Activated CD4-positive, alpha-beta T cell treated with anti-CD3 and anti-CD28 coated beads, Interleukin-2, amount 10 ng/mL, durations not matched to agents 24 days and 14 days (primary cell): ENCODE measurements at regions of chr7 and their contacts with region 1.

Region 1: DNA sequence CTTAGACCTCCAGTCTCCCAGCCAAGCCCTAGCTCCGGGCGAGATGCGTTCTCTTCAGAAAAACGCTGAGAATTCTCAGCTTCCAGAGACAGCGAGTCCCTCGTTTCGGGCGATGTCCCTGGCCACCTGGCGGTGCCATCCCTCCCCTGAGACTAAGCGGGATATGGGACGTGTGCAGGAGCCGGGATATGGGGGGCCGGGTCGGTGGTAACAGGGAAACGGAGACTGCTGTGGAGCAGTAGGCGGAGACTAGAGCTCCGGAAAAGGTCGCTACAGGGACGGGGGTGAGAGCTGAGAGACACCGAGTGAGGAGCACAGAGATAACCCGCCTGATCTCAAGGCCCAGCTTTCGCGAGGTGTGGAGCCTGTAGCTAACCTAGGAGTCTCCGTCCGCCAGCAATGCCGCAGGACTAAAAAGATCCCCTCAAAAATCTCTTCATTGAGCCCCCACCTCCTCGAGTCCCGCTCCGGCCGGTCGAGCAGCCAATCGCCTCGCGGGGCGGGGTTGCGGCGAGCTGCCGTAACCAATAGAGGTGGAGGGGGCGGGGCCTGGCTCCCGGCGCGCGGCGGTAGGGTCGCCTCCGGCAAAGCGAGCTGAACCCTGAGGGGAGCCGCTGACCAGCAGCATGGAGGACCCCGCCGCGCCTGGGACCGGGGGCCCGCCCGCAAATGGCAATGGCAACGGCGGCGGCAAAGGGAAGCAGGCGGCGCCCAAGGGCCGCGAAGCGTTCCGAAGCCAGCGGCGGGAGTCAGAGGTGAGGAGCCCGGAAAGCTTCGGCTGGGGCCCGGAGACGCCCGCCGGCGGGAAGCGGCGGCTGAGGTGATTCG is at the start of gene STRIP2:
- DNase-seq: peak; percentile 99
- H3K4me3 Mint-ChIP-seq: peak within 1 kb of the TSS; percentile 92
- H3K27ac Mint-ChIP-seq: peak within 1 kb of the TSS; percentile 90
- H3K4me1 Mint-ChIP-seq: peaks cover 32% of the 10 kb centered on the region
- H3K27me3 Mint-ChIP-seq: peaks cover 6% of the 10 kb centered on the region
- total RNA-seq, gene STRIP2: 86.6 and 89.6 TPM in 2 replicates

Region 2: DNA sequence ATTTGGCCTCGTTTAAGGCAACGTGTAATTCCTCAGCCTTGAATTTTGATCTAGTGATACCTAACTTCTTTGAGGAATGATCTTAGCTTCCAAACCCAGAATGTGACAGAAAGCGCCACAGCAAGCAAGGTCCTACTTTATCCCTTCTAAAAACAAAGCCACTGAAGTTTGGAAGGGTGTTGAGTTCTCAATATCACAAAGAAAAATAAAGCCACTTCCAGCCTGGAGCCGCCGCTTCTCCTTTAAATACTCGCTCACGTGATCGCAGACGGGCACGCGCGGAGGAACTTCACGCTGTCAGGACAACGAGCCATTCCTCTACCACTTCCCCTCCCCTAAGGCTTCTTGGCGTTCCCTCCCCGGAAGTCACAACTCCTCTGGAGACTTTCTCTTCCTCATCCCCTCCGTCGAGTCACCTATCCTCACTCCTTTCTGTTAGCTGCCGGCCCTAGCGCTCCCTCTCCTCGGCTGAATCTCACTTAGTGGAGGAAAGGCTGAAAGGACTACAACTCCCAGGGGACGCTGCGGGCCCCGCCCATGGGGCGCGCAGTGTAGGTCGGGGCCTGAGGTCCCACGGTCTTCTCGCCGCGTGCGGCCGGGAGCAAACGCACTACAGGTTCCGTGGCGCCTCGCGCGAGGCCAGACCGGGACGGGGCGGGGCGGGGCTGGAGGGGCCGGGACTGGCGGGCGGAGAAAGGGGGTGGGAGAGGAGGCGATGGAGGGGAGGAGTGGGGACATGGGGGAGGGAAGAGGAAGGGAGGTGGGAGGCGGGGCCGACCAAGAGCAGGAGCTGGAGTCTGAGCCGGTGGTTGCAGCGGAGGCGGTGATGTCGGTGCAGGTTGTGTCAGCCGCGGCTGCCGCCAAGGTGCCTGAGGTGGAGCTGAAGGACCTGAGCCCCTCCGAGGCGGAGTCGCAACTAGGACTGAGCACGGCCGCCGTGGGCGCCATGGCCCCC is 209.5 kb before region 1 on chr7 and contains the start of gene AHCYL2:
- intact Hi-C with region 1: loop called (anchors 1 kb)
- DNase-seq: peak; percentile 98
- H3K4me3 Mint-ChIP-seq: peak within 1 kb of the TSS; percentile 87
- H3K27ac Mint-ChIP-seq: peak within 1 kb of the TSS; percentile 96
- H3K4me1 Mint-ChIP-seq: peaks cover 24% of the 10 kb centered on the region
- H3K27me3 Mint-ChIP-seq: no peaks in the 10 kb centered on the region
- total RNA-seq, gene AHCYL2: 10.7 and 11.1 TPM in 2 replicates

Region 3: DNA sequence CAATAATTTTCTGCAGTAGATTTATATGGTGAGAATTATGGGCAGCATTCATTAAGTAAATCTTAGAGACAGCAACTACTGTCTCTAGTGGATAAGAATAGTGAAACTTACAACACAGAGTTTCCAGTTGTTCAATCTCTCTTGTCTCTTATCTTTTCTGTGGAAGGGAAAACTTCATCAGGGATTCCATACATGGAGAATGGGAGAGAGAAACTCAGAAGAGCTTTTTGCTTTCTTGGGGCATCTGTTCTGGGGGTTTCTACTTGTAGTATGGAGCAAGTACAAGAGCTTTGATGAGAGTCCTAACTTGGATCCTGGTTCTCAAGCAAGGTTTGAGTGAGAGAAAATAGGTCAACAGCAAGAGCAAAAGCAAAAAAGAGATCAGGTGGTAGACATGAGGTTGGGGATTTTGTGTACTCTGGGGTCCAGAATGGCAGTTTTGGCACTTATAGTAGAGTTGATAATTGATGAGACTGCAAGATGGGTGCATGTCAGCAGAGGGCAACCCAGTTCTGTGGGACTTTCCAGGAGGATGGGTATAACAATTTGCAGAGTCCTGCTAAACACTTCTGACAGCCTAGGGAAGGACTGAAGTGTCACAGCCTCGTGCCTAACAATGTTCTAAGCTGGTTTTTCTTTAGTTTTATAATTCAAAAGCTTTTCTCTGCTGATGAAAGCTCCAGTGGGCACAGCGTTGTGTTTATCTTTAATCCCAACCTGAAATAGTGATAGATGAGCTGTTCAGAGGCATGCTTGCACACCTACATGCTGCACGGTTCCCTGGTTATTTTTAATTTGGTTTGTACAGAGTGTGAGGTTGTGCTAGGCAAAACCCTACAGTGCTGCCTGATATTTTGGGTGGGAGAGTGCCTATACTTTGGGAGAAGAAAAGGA is 31.8 kb before region 1 on chr7:
- intact Hi-C with region 1: loop called (anchors 1 kb)
- DNase-seq: peak; percentile 73
- H3K4me3 Mint-ChIP-seq: no peak overlapping the region
- H3K27ac Mint-ChIP-seq: peak overlapping the region; percentile 6
- H3K4me1 Mint-ChIP-seq: peaks cover 20% of the 10 kb centered on the region
- H3K27me3 Mint-ChIP-seq: no peaks in the 10 kb centered on the region

Region 4: DNA sequence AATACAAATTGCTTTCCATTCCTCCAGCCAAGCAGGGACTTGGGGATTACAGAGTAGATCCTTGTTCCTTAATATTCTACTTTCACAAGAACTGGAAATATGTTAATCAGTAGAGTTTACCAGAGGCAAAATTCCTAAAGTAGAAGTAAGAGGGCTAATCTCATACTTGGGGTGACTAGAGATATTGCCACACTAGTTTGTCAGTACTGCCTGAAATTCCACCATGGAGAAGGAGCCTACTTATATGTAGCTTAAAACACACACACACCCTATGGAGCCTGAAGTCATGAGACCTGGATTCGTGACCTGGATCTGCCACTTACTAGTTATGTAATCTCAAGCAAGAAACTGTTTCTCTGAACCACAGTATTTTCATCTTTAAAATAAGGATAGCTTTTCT is 34.0 kb after region 1 on chr7:
- intact Hi-C with region 1: loop called (anchors 2 kb)
- DNase-seq: no peak
- H3K4me3 Mint-ChIP-seq: no peak overlapping the region
- H3K27ac Mint-ChIP-seq: no peak overlapping the region
- H3K4me1 Mint-ChIP-seq: peaks cover 15% of the 10 kb centered on the region
- H3K27me3 Mint-ChIP-seq: no peaks in the 10 kb centered on the region

Region 5: DNA sequence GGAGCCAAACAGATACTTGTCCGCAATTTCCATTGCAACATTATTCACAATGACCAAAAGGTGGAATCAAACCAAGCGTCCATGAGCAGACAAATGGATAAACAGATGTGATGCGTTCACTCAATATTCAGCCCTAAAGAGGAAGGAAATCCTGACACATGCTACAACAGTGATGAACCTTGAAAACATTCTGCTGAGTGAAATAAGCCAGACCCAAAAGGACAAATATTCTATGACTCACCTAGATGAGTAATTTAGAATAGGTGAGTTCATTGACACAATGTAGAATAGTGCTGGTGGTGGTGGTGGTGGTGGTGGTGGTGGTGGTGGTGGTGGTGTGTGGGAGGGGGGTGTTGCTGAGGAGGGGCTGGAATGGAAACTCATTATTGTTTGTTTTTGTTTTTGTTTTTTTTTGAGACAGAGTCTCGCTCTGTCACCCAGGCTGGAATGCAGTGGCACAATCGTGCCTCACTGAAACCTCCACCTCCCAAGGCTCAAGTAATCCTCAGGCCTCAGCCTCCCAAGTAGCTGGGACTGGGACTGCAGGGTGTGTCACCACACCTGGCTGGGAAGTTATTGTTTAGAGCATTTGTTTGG is 96.8 kb after region 1 on chr7:
- intact Hi-C with region 1: loop called (anchors 2 kb)
- DNase-seq: peak; percentile 61
- H3K4me3 Mint-ChIP-seq: no peak overlapping the region
- H3K27ac Mint-ChIP-seq: peak overlapping the region; percentile 76
- H3K4me1 Mint-ChIP-seq: peaks cover 11% of the 10 kb centered on the region
- H3K27me3 Mint-ChIP-seq: peaks cover 5% of the 10 kb centered on the region

Region 6: GRCh38 chr7:129952653-129953560 is 518.8 kb after region 1 on chr7 and contains the start of gene UBE2H:
- intact Hi-C with region 1: loop called (anchors 2 kb)
- DNase-seq: peak; percentile 95
- H3K4me3 Mint-ChIP-seq: no peak within 1 kb of the TSS
- H3K27ac Mint-ChIP-seq: peak within 1 kb of the TSS; percentile 100
- H3K4me1 Mint-ChIP-seq: peaks cover 17% of the 10 kb centered on the region
- H3K27me3 Mint-ChIP-seq: peaks cover 5% of the 10 kb centered on the region
- total RNA-seq, gene UBE2H: 21.7 and 24.2 TPM in 2 replicates